ENCODE measurements at regions of chr11 and their contacts with region 1.

Region 1: GRCh38 chr11:108593214-108593922 is at the start of gene EXPH5:
- DNase-seq: peak; percentile 97 to 100
- H3K4me3 ChIP-seq: peak within 1 kb of the TSS; percentile 74
- H3K27ac ChIP-seq: peak within 1 kb of the TSS; percentile 97
- H3K4me1 ChIP-seq: peaks cover 29% of the 10 kb centered on the region
- H3K27me3 ChIP-seq: no peaks in the 10 kb centered on the region
- CTCF ChIP-seq: peak; percentile 33; the same call in 1 of the 2 replicates
- total RNA-seq, gene EXPH5: 23.3 and 36.3 TPM in 2 replicates

Region 2: GRCh38 chr11:108222686-108223448 is 370.5 kb before region 1 on chr11 and contains the start of gene ATM:
- CTCF ChIA-PET with region 1: no interaction called
- POLR2A ChIA-PET with region 1: interaction called, 4 read pairs
- intact Hi-C with region 1: loop called (anchors 2 kb)
- DNase-seq: peak; percentile 98
- H3K4me3 ChIP-seq: peak within 1 kb of the TSS; percentile 97
- H3K27ac ChIP-seq: peak within 1 kb of the TSS; percentile 86
- H3K4me1 ChIP-seq: peaks cover 36% of the 10 kb centered on the region
- H3K27me3 ChIP-seq: no peaks in the 10 kb centered on the region
- CTCF ChIP-seq: peak; percentile 71; the same call in 1 of the 2 replicates
- total RNA-seq, gene ATM: 36.3 and 40.8 TPM in 2 replicates

Region 3: DNA sequence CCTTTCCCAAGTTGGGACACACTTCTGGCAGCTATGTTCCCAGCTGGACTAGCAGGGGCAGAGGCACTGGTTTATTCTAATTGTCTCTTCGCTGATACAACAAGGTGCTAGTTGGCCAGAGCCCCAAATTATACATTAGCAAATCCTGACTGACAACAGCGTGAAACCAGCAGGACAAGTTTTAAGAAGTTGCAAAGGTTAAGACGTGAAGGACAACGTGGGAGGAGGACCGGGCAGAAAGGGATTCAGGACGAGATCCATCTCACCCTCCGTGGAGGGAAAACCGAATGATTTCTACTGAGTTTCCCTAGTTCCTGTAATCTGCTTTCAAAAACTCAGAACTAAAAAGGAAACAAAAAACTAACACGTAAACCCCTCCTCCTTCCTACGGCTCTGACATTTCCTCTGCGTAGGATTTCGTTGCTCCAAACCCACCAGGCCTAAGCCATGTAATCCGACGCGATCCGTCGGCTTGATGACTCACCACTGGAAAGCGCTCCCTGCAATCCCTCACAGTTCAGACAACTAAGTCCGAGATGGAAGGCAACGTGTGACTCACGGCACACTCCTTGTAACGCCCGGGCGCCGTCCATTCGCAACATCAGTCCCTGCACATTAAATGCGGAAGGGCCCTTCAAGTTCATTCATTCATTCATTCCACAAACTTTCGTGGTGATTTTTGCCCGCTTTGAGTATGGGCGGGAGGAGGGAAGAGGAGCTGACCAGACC is 95.9 kb before region 1 on chr11:
- CTCF ChIA-PET with region 1: no interaction called
- POLR2A ChIA-PET with region 1: no interaction called
- intact Hi-C with region 1: loop called (anchors 1 kb)
- DNase-seq: peak; percentile 83 to 98
- H3K4me3 ChIP-seq: peak overlapping the region; percentile 78
- H3K27ac ChIP-seq: peak overlapping the region; percentile 87
- H3K4me1 ChIP-seq: peaks cover 24% of the 10 kb centered on the region
- H3K27me3 ChIP-seq: no peaks in the 10 kb centered on the region
- CTCF ChIP-seq: 0 out of 2 replicates have a peak, but pooled peaks have one; percentile 6

Region 4: DNA sequence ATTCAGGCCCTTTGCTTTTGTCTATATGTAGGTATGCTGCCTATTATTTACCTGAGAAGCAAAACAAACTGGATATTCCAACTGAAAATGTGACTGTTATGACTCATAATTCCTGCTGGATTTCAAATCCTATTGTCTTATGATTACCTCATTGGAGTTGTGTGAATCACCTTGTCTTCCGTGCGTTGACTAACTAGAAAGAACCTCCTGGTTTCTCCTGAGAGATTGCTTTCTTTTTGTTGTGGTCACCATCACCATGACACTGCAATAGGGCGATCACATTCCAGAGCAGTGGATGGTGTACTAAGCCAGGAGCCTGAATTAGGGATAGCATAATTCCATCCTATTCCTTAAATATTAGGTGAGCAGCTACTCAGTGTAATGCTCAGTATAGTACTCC is 23.2 kb after region 1 on chr11:
- CTCF ChIA-PET with region 1: no interaction called
- POLR2A ChIA-PET with region 1: interaction called, 12 read pairs
- intact Hi-C with region 1: loop called (anchors 1 kb)
- DNase-seq: peak; percentile 66 to 100
- H3K4me3 ChIP-seq: no peak overlapping the region
- H3K27ac ChIP-seq: peak overlapping the region; percentile 90
- H3K4me1 ChIP-seq: peaks cover 45% of the 10 kb centered on the region
- H3K27me3 ChIP-seq: no peaks in the 10 kb centered on the region
- CTCF ChIP-seq: no peak

Region 5: DNA sequence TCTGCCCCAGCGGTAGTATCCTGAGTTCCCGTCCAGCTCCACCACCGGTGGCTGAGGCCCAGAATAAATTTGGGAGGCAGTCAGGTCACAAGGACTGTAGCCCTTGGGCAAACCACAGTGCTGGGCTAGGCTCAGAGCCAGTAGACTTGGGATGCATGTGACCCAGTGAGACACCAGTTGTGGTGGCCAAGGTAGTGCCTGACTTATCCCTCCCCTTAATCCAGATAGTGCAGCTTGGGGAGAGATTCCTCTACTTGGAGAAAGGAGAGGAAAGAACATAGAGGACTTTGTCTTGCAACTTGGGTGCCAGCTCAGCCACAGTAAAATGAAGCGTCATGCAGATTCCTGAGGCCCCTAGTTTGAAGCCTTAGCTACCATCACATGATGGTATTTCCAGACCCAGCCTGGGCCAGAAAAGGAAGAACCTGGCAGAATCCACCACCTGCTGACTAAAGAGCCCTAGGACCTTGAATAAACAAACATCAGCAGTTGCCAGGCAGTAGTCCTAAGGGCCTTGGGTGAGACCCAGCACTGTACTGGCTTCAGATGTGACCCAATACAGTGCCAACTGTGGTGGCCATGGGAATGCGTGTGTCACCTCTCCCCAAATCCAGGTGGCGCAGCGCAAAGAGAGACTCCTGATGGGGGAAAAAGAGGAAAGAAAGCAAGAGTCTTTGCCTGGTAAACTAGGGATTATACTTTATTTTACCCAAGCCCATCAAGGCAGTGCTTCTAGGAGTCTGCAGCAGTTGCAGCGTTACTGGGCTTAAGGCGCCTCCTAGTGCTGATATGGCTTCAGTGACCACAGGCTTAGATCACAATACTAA is 54.5 kb after region 1 on chr11:
- CTCF ChIA-PET with region 1: no interaction called
- POLR2A ChIA-PET with region 1: no interaction called
- intact Hi-C with region 1: loop called (anchors 2 kb)
- DNase-seq: peak; percentile 64 to 74
- H3K4me3 ChIP-seq: no peak overlapping the region
- H3K27ac ChIP-seq: no peak overlapping the region
- H3K4me1 ChIP-seq: no peaks in the 10 kb centered on the region
- H3K27me3 ChIP-seq: no peaks in the 10 kb centered on the region
- CTCF ChIP-seq: peak; percentile 95

Region 6: DNA sequence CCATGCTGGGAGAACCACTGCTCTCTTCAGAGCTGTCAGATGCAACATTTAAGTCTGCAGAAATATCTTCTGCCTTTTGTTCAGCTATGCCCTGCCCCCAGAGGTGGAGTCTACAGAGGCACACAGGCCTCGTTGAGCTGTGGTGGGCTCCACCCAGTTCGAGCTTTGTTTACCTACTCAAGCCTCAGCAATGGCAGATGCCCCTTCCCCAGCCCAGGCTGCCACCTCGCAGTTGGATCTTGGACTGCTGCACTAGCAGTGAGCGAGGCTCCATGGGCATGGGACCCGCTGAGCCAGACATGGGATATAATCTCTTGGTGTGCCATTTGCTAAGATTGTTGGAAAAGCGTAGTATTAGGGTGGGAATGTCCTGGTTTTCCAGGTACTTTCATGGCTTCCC is 599.5 kb after region 1 on chr11:
- CTCF ChIA-PET with region 1: no interaction called
- POLR2A ChIA-PET with region 1: no interaction called
- intact Hi-C with region 1: no loop called
- DNase-seq: no peak
- H3K4me3 ChIP-seq: no peak overlapping the region
- H3K27ac ChIP-seq: no peak overlapping the region
- H3K4me1 ChIP-seq: peaks cover 6% of the 10 kb centered on the region
- H3K27me3 ChIP-seq: no peaks in the 10 kb centered on the region
- CTCF ChIP-seq: no peak

Region 7: GRCh38 chr11:110296226-110297075 is 1703.1 kb after region 1 on chr11 and contains the start of gene RDX:
- CTCF ChIA-PET with region 1: no interaction called
- POLR2A ChIA-PET with region 1: interaction called, 17 read pairs
- intact Hi-C with region 1: no loop called
- DNase-seq: peak; percentile 91 to 93
- H3K4me3 ChIP-seq: peak within 1 kb of the TSS; percentile 86
- H3K27ac ChIP-seq: peak within 1 kb of the TSS; percentile 83
- H3K4me1 ChIP-seq: peaks cover 63% of the 10 kb centered on the region
- H3K27me3 ChIP-seq: no peaks in the 10 kb centered on the region
- CTCF ChIP-seq: no peak; the same call in 1 of the 2 replicates
- total RNA-seq, gene RDX: 143 and 196 TPM in 2 replicates